Caco-2 (cell line): ENCODE measurements at regions of chr19 and their contacts with region 1.

Region 1: GRCh38 chr19:35545001-35545911 is at the start of gene TMEM147:
- DNase-seq: peak; percentile 91 to 96
- H3K4me3 ChIP-seq: peak within 1 kb of the TSS; percentile 90
- H3K4me3 Mint-ChIP-seq: peak within 1 kb of the TSS; percentile 95
- H3K27ac Mint-ChIP-seq: peak within 1 kb of the TSS; percentile 91
- H3K4me1 ChIP-seq: peaks cover 14% of the 10 kb centered on the region
- H3K4me1 Mint-ChIP-seq: peaks cover 24% of the 10 kb centered on the region
- H3K27me3 ChIP-seq: no peaks in the 10 kb centered on the region
- H3K27me3 Mint-ChIP-seq: no peaks in the 10 kb centered on the region
- CTCF ChIP-seq: no peak
- total RNA-seq, gene TMEM147: 126 and 140 TPM in 2 replicates

Region 2: DNA sequence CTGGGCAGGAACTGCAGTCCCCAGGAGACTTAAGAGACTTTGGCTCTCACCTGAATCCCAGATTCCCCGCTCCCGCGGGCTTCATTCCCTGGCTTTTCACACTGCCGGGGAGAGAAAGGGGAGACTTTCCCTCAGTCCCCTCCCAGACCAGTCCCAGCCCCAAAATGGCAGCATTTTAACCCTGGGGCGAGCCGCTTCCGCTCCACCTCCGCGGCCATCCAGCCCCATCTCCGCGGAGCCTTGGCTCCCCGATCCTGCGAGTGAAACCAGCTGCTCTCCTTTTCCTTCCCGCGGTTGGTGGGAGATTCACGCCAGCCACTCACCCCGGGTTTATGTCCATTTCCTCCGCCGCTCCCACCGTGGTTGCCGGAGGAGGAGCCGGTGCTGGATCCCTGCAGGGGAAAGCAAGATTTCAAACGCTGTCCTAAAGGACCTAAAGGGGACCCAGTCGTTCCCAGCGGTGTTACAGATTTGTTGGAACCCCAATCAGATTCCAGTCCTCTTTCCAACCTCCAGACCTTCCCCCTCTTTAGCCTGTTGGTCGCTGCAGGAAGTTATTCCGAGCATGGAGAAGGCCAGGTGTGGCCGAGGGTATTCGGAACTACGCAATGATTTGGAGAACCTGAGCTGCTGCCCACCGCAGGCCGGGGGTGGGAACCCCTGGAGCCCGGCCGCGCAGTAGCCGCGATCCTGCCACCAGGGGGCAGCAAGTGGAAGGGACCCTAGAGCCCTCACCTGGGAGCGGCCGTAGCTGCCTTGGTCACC is 35.2 kb before region 1 on chr19:
- CTCF ChIA-PET with region 1: interaction called, 4 read pairs
- POLR2A ChIA-PET with region 1: interaction called, 3 read pairs
- intact Hi-C with region 1: loop called (anchors 1 kb)
- DNase-seq: peak; percentile 94 to 98
- H3K4me3 ChIP-seq: peak overlapping the region; percentile 69
- H3K4me3 Mint-ChIP-seq: peak overlapping the region; percentile 99
- H3K27ac Mint-ChIP-seq: peak overlapping the region; percentile 99
- H3K4me1 ChIP-seq: peaks cover 11% of the 10 kb centered on the region
- H3K4me1 Mint-ChIP-seq: peaks cover 6% of the 10 kb centered on the region
- H3K27me3 ChIP-seq: no peaks in the 10 kb centered on the region
- H3K27me3 Mint-ChIP-seq: no peaks in the 10 kb centered on the region
- CTCF ChIP-seq: peak; percentile 97 to 98

Region 3: GRCh38 chr19:35628565-35629331 is 83.5 kb after region 1 on chr19 and contains the start of gene RBM42:
- CTCF ChIA-PET with region 1: no interaction called
- POLR2A ChIA-PET with region 1: no interaction called
- intact Hi-C with region 1: loop called (anchors 5 kb)
- DNase-seq: peak; percentile 99
- H3K4me3 ChIP-seq: peak within 1 kb of the TSS; percentile 90
- H3K4me3 Mint-ChIP-seq: peak within 1 kb of the TSS; percentile 100
- H3K27ac Mint-ChIP-seq: peak within 1 kb of the TSS; percentile 100
- H3K4me1 ChIP-seq: no peaks in the 10 kb centered on the region
- H3K4me1 Mint-ChIP-seq: peaks cover 7% of the 10 kb centered on the region
- H3K27me3 ChIP-seq: no peaks in the 10 kb centered on the region
- H3K27me3 Mint-ChIP-seq: no peaks in the 10 kb centered on the region
- CTCF ChIP-seq: no peak
- total RNA-seq, gene RBM42: 140 and 165 TPM in 2 replicates